Activated T-helper 1 cell treated with anti-CD3 and anti-CD28 coated beads, Interleukin-12 subunit alpha, Interleukin-12 subunit beta, Interleukin-2, Interleukin-4 antibody, amounts not matched to agents 30 ng/mL and 10 ng/mL and 1 ng/mL, durations not matched to agents 14 hours and 24 hours and 36 hours (primary cell): ENCODE measurements at regions of chr2 and their contacts with region 1.

Region 1: DNA sequence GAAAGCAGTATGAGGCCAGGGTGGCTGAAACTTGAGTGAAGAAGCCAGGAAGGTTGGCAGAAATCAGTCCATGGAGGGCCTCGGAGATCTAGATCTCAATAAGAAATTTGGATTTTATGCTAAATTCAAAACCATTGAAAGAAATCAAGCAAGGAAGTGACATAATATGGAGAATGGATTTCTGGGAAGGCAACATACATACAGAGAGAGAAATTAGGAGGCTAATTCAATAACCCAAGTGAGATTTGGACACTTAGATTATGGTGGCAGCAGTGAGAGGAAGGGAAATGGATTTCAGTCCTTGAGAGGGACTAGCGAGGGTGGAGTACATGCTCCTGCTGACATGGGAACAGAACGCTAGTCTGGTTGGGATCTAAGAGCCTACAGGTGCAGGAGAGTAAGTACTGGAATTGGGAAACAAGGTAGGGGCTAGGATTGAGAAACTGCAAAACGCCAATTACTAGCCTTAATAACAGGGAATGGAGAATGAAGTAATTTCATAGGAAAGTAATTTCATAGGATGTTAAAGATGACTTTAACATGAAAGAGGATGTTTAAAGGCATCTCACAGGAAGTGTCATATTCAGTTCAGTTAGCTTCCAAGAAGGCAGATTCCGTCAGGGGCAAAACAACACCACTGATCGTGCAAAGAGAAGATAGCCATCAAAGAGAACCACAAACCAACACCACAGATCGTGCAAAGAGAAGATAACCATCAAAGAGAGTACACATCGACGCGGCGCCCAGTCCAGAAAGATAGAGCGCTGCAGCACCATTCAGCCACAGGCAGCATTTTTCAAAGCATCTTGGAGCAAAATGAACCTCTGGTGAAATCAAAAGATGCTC is 27.2 kb downstream of the CDKL4 start:
- DNase-seq: peak; percentile 85
- H3K4me3 Mint-ChIP-seq: peak overlapping the region; percentile 30
- H3K27ac Mint-ChIP-seq: peak overlapping the region; percentile 91
- H3K4me1 Mint-ChIP-seq: peaks cover 77% of the 10 kb centered on the region
- H3K27me3 Mint-ChIP-seq: no peaks in the 10 kb centered on the region

Region 2: DNA sequence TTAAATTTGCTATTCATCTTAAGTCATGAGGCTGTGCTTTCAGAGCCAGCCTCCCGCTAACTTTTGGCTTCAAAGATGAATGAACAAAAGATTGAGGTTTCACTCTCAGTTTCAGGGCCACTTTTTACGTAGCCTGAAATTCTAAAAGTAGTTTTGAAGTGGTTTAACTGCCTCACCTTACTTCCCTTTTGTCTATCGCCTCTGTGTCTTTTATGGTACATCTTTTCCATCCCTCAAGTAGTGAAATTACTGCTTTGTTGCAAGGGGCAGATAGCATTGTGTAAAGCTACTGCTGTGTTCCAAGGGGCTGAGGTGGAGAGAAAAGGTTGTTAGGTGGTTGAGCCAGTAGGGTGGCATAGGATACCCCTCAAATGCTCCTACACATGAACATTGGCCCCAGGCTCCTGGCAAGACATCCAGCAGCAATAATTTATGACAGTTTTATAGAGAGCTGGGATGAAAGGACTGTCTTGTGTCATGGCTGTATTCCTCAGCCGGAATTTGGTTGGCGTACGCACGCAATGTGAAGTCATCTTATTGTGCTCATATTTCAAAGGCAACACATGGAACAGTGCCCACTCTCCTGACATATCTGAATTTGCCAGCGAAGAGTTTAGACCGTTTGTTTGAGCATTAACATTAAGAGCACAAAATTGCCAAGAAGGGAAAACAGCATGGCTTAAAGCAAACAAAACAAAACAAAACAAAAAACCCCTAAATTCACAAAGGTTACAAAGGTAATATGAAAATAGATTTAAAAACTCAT is 1840.0 kb before region 1 on chr2:
- intact Hi-C with region 1: loop called (anchors 2 kb)
- DNase-seq: peak; percentile 29
- H3K4me3 Mint-ChIP-seq: peak overlapping the region; percentile 34
- H3K27ac Mint-ChIP-seq: peak overlapping the region; percentile 88
- H3K4me1 Mint-ChIP-seq: peaks cover 51% of the 10 kb centered on the region
- H3K27me3 Mint-ChIP-seq: peaks cover 51% of the 10 kb centered on the region

Region 3: GRCh38 chr2:38750891-38751595 is 465.5 kb before region 1 on chr2 and contains the start of gene SRSF7:
- intact Hi-C with region 1: loop called (anchors 2 kb)
- DNase-seq: peak; percentile 96
- H3K4me3 Mint-ChIP-seq: peak within 1 kb of the TSS; percentile 98
- H3K27ac Mint-ChIP-seq: peak within 1 kb of the TSS; percentile 100
- H3K4me1 Mint-ChIP-seq: peaks cover 54% of the 10 kb centered on the region
- H3K27me3 Mint-ChIP-seq: no peaks in the 10 kb centered on the region
- total RNA-seq, gene SRSF7: 417 and 422 TPM in 2 replicates

Region 4: GRCh38 chr2:39024833-39025232 is 191.7 kb before region 1 on chr2:
- intact Hi-C with region 1: no loop called
- DNase-seq: no peak
- H3K4me3 Mint-ChIP-seq: no peak overlapping the region
- H3K27ac Mint-ChIP-seq: no peak overlapping the region
- H3K4me1 Mint-ChIP-seq: no peaks in the 10 kb centered on the region
- H3K27me3 Mint-ChIP-seq: no peaks in the 10 kb centered on the region

Region 5: GRCh38 chr2:39141331-39142271 is 75.0 kb before region 1 on chr2:
- intact Hi-C with region 1: loop called (anchors 2 kb)
- DNase-seq: peak; percentile 47
- H3K4me3 Mint-ChIP-seq: peak overlapping the region; percentile 55
- H3K27ac Mint-ChIP-seq: peak overlapping the region; percentile 85
- H3K4me1 Mint-ChIP-seq: peaks cover 63% of the 10 kb centered on the region
- H3K27me3 Mint-ChIP-seq: peaks cover 3% of the 10 kb centered on the region

Region 6: DNA sequence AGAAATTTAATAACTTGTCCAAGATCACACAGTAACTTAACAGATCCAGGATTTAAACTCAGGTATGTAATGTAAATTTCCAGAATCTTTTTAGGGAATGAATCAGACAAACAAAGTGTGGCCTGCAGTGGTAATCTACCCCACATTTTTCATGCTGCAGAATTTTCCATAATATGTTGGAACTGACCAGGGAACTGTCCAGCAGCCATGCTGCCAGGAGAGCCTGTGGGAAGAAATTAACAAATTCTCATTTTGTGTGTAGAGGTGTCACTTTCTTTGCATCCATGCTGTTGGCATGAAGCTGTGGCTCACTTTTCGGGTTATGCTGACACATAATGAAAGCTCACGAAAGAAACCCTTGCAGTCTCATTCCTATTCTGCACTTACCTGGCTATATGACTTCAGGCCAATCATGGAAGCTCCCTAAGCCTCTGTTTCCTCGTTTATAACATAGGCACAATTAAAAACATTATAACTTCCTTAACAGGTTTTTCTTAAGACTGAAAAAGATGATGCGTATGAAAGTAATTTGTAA is 27.5 kb before region 1 on chr2:
- intact Hi-C with region 1: loop called (anchors 1 kb)
- DNase-seq: no peak
- H3K4me3 Mint-ChIP-seq: no peak overlapping the region
- H3K27ac Mint-ChIP-seq: no peak overlapping the region
- H3K4me1 Mint-ChIP-seq: peaks cover 16% of the 10 kb centered on the region
- H3K27me3 Mint-ChIP-seq: peaks cover 1% of the 10 kb centered on the region

Region 7: DNA sequence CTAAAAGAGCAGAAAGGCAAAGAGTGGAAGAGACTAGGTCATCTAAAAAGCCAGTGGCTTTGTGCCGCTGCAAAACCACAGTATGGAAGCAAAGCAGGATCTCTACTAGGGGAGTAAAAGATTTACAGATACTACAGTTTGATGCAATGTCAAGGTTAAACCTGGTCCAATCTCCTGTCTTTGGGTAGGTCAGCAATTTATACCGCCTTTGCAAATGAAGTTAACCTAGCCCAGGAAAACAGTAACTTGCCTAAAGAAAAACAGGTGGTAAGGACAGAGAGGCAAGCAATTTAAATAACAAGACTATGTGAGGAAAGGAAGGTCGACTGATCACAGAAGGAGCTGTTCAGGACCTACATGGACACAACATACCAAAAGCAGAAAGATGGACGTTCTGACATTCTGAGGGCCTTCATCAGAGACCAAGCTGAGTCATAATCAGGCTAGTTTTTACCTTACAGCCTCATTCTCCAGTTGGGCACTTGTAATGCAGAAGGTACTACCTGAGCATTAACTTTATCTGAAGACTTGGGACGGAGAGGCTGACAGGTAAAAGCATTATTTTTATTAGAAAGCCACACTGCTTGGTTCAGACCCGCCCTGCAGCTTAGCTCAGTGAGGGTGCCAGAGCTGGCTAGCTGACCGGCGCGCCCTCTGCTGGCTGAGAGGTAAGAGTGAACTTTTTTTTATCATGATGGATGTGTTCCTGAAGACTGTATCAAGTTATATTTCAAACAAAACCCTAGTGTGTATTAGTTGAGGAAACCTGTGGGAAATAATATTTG is 11.3 kb after region 1 on chr2:
- intact Hi-C with region 1: loop called (anchors 1 kb)
- DNase-seq: peak; percentile 70
- H3K4me3 Mint-ChIP-seq: peak overlapping the region; percentile 76
- H3K27ac Mint-ChIP-seq: peak overlapping the region; percentile 83
- H3K4me1 Mint-ChIP-seq: peaks cover 54% of the 10 kb centered on the region
- H3K27me3 Mint-ChIP-seq: no peaks in the 10 kb centered on the region

Region 8: GRCh38 chr2:39513641-39514094 is 297.1 kb after region 1 on chr2:
- intact Hi-C with region 1: loop called (anchors 2 kb)
- DNase-seq: peak; percentile 37
- H3K4me3 Mint-ChIP-seq: peak overlapping the region; percentile 3
- H3K27ac Mint-ChIP-seq: peak overlapping the region; percentile 66
- H3K4me1 Mint-ChIP-seq: peaks cover 50% of the 10 kb centered on the region
- H3K27me3 Mint-ChIP-seq: peaks cover 2% of the 10 kb centered on the region